ENCODE measurements at regions of chr4 and their contacts with region 1.

Region 1: DNA sequence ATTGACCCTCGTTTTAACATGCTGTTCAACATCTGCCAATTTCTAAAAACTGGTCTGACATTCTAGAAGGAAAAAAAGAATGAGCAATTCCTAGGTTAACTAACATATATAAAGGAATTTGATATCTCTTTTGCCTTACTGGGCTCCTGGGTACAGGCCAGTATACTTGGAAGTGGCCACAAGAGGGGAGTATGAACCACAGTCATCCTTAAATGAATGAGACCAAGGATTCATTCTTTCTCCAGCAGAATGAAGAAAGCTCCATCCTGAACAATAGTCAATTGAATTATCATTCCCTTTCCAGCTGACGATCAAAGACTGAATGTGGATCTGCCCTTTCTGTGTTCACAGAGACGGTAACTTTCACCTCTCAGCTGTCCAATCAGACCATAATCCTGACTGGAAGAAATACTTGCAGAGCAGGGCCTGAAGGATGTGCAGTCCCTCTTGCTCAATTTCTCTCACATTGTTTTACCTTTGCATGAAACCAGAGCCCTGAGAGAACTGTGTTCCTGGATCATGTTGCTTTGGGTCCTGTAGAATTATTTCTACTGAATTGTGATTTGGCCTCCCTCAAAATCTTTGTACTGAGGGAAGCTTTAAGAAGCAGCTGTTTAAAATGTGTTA is 14.8 kb upstream of the SPARCL1 start:
- DNase-seq: no peak
- ATAC-seq: peak; percentile 79
- H3K4me3 ChIP-seq: no peak overlapping the region
- H3K27ac ChIP-seq: no peak overlapping the region
- H3K4me1 ChIP-seq: peaks cover 0 to 4% of the 10 kb centered on the region in 2 donors
- H3K27me3 ChIP-seq: no peaks in the 10 kb centered on the region

Region 2: DNA sequence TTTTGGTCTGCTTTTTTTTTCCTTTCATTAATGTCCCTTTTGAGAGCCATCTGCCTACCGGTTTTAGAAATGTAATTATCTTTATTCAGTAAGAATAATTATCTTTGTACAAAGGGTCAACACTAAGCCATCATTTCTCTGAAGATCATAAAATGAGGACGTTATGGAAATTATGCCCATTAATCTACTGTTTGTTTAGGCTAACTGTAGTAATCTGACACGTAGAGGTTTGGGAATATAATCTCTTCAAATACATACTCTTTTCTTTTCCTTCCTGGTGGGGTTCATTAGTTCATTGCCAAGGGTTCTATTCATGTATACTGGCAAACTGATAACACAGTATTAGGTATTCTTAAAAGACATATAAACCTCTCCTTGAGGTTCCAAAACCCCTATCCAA is 217.5 kb before region 1 on chr4:
- intact Hi-C with region 1: no loop called
- DNase-seq: no peak
- ATAC-seq: no peak
- H3K4me3 ChIP-seq: no peak overlapping the region
- H3K27ac ChIP-seq: no peak overlapping the region
- H3K4me1 ChIP-seq: peaks cover 0 to 2% of the 10 kb centered on the region in 2 donors
- H3K27me3 ChIP-seq: no peaks in the 10 kb centered on the region

Region 3: DNA sequence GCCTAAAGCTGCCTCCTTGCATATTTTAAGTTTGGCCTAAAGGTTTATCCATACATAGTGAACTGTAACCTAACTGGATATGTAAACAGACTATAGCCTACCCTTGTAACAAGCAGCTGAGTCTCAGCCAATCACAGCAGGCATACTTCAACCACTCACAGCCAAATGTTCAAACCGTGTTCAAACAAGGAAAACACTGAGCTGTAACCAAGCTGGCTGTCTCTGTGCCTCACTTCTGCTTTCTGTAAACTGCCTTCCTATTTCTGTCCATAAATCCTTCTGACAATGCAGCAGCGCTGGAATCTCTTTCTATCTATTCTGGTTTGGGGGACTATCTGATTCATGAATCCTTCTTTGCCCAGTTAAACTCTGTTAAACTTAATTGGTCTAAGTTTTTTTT is 80.8 kb after region 1 on chr4:
- intact Hi-C with region 1: loop called in 1 of 2 experiments (anchors 5 kb)
- DNase-seq: no peak
- ATAC-seq: no peak
- H3K4me3 ChIP-seq: no peak overlapping the region
- H3K27ac ChIP-seq: no peak overlapping the region
- H3K4me1 ChIP-seq: peaks cover 0 to 6% of the 10 kb centered on the region in 2 donors
- H3K27me3 ChIP-seq: no peaks in the 10 kb centered on the region

Region 4: GRCh38 chr4:87838890-87839591 is 295.1 kb after region 1 on chr4:
- intact Hi-C with region 1: loop called (anchors 2 to 5 kb)
- DNase-seq: no peak
- ATAC-seq: no peak
- H3K4me3 ChIP-seq: no peak overlapping the region
- H3K27ac ChIP-seq: no peak overlapping the region
- H3K4me1 ChIP-seq: peaks cover 0 to 1% of the 10 kb centered on the region in 2 donors
- H3K27me3 ChIP-seq: no peaks in the 10 kb centered on the region